ENCODE measurements at regions of chr1 and their contacts with region 1.

Region 1: DNA sequence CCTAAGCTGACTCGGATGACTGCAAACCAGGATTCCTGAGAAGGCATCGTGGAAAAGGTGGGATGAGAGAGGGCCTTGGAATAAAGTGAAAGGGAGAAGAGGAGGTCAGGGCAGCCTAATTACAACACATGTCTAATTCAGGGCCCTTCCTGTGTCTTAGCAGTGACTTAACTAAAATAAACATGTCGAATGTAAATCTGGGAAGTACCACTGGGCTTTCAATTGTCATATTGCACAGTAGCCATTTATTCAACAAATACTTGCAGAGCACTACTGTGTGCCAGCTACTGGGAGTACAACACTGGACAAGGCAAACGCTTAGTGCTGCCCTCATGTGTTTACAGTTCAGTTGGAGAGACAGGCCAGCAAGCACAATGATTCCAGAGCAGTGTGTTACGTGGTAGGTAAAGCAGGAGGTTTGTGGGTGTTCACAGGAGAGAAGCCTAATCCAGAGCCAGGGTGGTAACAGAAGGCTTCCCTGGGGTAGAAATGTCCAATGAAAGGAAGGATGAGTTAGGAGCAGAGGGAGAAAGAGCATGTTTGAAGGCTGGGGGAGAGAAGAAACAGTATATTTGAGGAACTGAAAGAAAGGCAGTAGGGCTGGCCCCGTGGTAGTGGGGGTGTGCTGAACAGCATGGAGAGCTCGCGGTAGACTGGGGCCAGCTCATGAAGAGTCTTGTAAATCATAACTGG is 38.0 kb upstream of the RASAL2 start:
- DNase-seq: peak; percentile 84

Region 2: DNA sequence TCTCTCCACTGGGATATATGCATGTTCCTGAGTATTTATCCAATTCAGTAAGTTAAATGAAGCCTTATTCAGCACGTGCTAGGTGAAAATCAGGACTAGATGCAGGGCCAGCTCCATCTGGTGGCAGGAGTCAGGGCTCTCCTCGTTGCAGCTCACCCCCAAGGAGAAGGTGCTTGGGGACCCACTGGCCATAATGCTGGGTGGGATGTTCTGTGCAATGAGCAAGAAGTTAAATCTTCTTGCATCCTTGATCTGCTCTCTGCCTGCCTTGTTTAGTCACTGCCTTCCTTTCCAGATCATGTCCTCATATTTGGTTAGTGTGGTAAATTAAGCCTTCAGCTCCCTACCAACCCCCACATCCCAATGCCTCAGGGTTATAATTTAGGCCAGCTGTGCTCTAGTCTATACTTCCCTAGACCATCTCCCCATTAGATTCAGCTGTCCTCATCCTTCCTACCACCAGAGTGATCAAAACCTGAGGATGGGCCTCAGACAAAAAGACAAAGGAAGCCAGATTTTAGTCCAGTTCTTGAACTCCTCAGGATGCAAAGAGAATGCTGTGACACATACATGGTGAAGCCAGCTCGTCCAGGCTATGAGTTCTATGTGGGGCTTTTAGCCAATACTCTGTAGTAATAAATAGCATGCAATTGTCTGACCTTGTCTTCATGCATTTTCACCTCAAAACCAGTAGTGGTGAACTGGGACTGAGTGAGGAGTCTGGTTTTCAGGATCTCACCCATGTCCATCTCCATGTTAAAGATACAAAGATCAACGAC is 142.0 kb before region 1 on chr1:
- in situ Hi-C with region 1: no loop called
- DNase-seq: peak; percentile 5

Region 3: DNA sequence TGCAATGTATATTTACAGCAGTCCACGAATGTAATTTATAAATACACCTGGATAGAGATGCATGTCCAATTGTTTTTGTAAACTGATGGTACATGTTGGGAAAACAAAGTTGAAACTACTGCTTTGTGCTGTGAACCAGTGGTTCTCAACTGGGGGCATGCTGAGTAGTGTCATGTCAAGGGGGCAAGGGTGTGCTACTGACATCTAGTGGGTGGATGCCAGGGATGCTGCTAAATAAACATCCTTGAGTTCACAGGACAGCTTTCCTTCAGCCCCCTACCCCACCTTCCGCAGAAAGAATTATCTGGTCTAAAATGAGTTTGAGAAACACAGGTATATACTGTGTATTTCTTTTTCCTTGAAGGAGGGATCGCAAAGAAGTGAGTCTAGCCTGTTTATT is 133.9 kb after region 1 on chr1:
- in situ Hi-C with region 1: loop called (anchors 25 kb)
- DNase-seq: peak; percentile 80

Region 4: GRCh38 chr1:178282949-178283367 is 227.0 kb after region 1 on chr1:
- in situ Hi-C with region 1: loop called (anchors 25 kb)
- DNase-seq: peak; percentile 42

Measured in KBM-7 (cell line).